Dorsolateral prefrontal cortex (tissue), 120 donors: ENCODE measurements at regions of chr6 and their contacts with region 1.

Region 1: DNA sequence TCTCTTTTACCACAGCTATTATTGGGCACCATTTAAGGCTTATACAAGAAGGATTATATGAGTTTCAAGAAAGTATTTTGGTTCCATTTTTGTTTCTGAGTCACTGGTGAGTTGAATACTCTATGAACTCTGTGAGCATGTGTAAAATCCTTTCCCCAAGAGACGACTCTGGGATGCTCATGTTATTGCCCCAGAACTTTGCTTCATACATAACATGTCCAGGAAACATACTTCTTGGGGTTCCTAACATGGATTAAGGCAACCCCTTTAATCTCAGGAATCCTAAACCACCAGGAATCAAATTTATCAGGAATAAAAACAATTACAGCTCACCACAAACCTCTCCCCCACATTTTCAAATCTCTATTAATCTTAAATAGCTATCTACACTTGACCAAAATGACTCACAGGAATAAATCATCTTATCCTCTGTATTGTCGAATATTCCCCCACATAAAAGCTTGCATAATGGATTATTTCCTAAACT is 117.5 kb upstream of the COL21A1 start:
- DNase-seq: no peak
- H3K4me3 ChIP-seq: no peak overlapping the region
- H3K27ac ChIP-seq: no peak overlapping the region
- H3K27me3 ChIP-seq: no peaks in the 10 kb centered on the region
- CTCF ChIP-seq: no peak

Region 2: DNA sequence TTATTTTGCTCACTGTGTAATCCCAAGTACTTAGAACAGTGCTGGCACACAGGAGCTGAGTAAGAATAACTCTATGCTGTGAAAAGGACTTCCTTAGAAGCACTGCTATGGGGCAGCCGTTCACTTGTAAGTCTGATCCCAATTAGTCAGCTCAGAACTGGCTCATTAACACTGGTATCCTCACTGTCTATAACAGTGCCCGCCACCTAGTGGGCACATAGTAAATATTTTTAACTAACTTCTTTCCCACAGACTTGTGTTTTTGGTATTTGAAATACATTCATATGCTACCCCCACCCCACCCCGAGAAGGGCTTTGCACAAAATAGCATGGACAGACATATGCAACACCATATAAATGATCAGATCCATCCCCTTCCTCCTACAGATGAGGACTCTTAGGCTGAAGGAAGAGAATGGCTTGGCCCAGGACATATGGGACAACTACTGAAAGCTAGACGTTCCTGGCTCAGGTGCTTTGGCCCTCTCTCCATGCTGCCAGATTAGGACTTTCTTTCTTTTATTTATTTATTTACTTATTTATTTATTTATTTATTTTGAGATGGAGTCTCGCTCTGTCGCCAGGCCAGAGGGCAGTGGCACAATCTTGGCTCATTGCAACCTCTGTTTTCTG is 230.7 kb after region 1 on chr6:
- intact Hi-C with region 1: loop called (anchors 2 to 5 kb)
- DNase-seq: peak in 5 of 10 donors; percentile 18 to 40 (median 31)
- H3K4me3 ChIP-seq: no peak overlapping the region
- H3K27ac ChIP-seq: peak overlapping the region in 26 of 59 donors; percentile 10 to 68 (median 33)
- H3K27me3 ChIP-seq: no peaks in the 10 kb centered on the region
- CTCF ChIP-seq: peak; percentile 57 to 81 (median 70)